CD4-positive, alpha-beta T cell (primary cell): ENCODE measurements at regions of chr22 and their contacts with region 1.

Region 1: GRCh38 chr22:29870574-29870973 is 12.4 kb upstream of the MTMR3 start:
- DNase-seq: peak in 5 of 14 experiments; percentile 4 to 43 (median 32)
- ATAC-seq: peak; percentile 89
- H3K4me3 ChIP-seq: no peak overlapping the region
- H3K4me3 Mint-ChIP-seq: no peak overlapping the region
- H3K27ac ChIP-seq: no peak overlapping the region
- H3K27ac Mint-ChIP-seq: no peak overlapping the region
- H3K4me1 ChIP-seq: peaks cover 6% of the 10 kb centered on the region
- H3K4me1 Mint-ChIP-seq: peaks cover 6% of the 10 kb centered on the region
- H3K27me3 ChIP-seq: no peaks in the 10 kb centered on the region
- H3K27me3 Mint-ChIP-seq: no peaks in the 10 kb centered on the region
- CTCF ChIP-seq: no peak

Region 2: DNA sequence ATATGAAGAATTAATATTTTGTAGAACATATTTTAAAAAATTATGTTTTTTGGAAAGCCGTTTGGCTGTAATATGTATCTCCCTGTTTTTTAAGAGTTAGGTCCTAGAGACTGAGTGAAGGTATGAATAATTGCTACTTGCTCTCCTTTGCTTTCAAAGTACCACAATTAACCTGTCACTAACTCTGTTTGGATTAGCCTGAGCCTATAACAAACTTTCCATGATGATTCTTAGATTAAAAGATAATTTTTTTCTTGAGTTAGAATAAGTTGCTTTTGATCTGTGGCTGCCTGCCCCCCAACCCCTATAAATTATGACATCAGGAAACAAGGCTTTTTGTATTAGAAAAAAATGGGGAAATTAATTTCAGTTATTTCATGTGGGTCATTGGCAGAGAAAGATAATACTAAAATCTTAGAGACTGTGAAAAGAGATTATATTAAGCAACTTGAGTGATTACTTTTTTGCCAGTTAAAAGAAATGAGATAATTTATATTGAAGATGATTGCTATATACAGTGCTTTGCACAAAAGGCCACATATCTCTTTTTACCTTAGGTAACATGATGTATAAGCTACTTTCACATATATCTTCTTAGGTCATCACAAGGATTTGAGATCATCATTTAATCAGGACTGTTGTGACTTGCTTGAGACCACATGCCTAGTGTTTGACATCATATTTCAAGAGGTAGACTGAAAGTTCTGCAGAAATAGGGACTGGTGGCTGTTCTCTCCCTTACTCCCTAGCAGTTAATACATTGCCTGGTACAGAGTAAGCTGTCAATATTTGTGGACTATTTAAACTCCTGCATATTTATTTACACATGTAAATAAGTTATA is 22.0 kb after region 1 on chr22:
- CTCF ChIA-PET with region 1: no interaction called
- POLR2A ChIA-PET with region 1: no interaction called
- intact Hi-C with region 1: loop called in 1 of 2 experiments (anchors 2 kb)
- DNase-seq: no peak
- ATAC-seq: no peak
- H3K4me3 ChIP-seq: no peak overlapping the region
- H3K4me3 Mint-ChIP-seq: no peak overlapping the region
- H3K27ac ChIP-seq: no peak overlapping the region
- H3K27ac Mint-ChIP-seq: no peak overlapping the region
- H3K4me1 ChIP-seq: peaks cover 8% of the 10 kb centered on the region
- H3K4me1 Mint-ChIP-seq: peaks cover 55% of the 10 kb centered on the region
- H3K27me3 ChIP-seq: no peaks in the 10 kb centered on the region
- H3K27me3 Mint-ChIP-seq: no peaks in the 10 kb centered on the region
- CTCF ChIP-seq: no peak

Region 3: GRCh38 chr22:29914165-29914564 is 43.6 kb after region 1 on chr22:
- CTCF ChIA-PET with region 1: no interaction called
- POLR2A ChIA-PET with region 1: no interaction called
- intact Hi-C with region 1: no loop called
- DNase-seq: no peak
- ATAC-seq: no peak
- H3K4me3 ChIP-seq: no peak overlapping the region
- H3K4me3 Mint-ChIP-seq: no peak overlapping the region
- H3K27ac ChIP-seq: no peak overlapping the region
- H3K27ac Mint-ChIP-seq: no peak overlapping the region
- H3K4me1 ChIP-seq: peaks cover 16% of the 10 kb centered on the region
- H3K4me1 Mint-ChIP-seq: peaks cover 87% of the 10 kb centered on the region
- H3K27me3 ChIP-seq: no peaks in the 10 kb centered on the region
- H3K27me3 Mint-ChIP-seq: no peaks in the 10 kb centered on the region
- CTCF ChIP-seq: no peak